Psoas muscle (tissue), 8 donors: ENCODE measurements at regions of chr22 and their contacts with region 1.

Region 1: GRCh38 chr22:43955040-43955882 is at the start of gene SAMM50:
- DNase-seq: peak; percentile 95 to 97
- ATAC-seq: peak; percentile 95 to 96 (median 96)
- H3K4me3 ChIP-seq: peak within 1 kb of the TSS; percentile 85
- H3K27ac ChIP-seq: peak within 1 kb of the TSS; percentile 91
- H3K4me1 ChIP-seq: peaks cover 32% of the 10 kb centered on the region
- H3K27me3 ChIP-seq: no peaks in the 10 kb centered on the region
- CTCF ChIP-seq: no peak
- total RNA-seq, gene SAMM50: 59.3 to 95.0 (median 83.7) TPM

Region 2: GRCh38 chr22:43553451-43554258 is 401.6 kb before region 1 on chr22:
- intact Hi-C with region 1: no loop called
- DNase-seq: no peak
- ATAC-seq: no peak
- H3K4me3 ChIP-seq: no peak overlapping the region
- H3K27ac ChIP-seq: no peak overlapping the region
- H3K4me1 ChIP-seq: no peaks in the 10 kb centered on the region
- H3K27me3 ChIP-seq: no peaks in the 10 kb centered on the region
- CTCF ChIP-seq: no peak

Region 3: DNA sequence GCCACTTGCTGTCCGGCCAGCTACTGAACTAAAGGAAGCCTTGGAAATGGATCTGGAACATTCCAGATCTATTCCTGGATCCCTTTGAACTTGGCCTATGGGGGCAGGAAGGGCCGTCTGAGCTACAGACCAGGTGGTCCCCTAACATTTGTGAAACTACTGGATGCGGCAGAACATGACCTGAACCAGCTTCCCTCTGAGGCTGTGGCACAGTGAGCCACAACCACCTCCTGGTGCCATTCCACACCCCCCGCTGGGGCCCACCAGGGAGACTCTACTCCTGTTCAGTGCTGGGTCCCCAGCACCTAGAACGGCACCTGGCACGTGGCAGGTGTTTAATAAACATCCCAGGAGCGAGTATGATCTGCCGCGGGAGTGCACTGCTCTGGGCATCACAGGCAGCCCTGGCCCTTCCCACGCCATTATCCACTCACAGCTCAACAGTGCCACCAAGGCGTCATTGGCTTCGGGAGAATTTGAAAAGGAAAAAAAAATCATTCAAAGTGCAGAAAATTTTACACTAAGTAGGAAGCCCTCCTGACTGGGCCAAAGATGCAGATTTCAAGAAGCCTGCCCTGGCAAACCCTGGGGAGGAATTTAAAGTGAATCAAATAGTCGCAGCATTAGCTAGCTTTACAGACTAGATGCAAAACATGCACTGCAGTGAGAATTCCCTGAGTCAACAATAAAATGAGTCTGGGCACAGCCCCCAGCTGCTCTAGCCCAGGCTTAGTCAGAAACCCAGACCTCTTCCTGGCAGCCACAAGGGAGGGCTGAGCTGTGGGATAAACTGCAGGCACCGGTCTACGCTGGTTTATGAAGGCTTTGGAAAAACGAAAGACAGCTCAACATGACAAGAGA is 128.9 kb before region 1 on chr22:
- intact Hi-C with region 1: loop called in 1 of 2 experiments (anchors 10 kb)
- DNase-seq: peak in 1 of 2 donors; percentile 46
- ATAC-seq: no peak
- H3K4me3 ChIP-seq: no peak overlapping the region
- H3K27ac ChIP-seq: no peak overlapping the region
- H3K4me1 ChIP-seq: peaks cover 17% of the 10 kb centered on the region
- H3K27me3 ChIP-seq: peaks cover 0 to 33% (median 14%) of the 10 kb centered on the region in 3 donors
- CTCF ChIP-seq: no peak

Region 4: GRCh38 chr22:43923631-43924464 is 31.4 kb before region 1 on chr22 and contains the start of gene PNPLA3:
- intact Hi-C with region 1: no loop called
- DNase-seq: peak; percentile 92
- ATAC-seq: peak; percentile 70 to 95 (median 80)
- H3K4me3 ChIP-seq: peak within 1 kb of the TSS; percentile 71
- H3K27ac ChIP-seq: peak within 1 kb of the TSS; percentile 85
- H3K4me1 ChIP-seq: peaks cover 4% of the 10 kb centered on the region
- H3K27me3 ChIP-seq: peaks cover 0 to 10% (median 1%) of the 10 kb centered on the region in 3 donors
- CTCF ChIP-seq: no peak
- total RNA-seq, gene PNPLA3: 0.32 to 3.3 (median 0.66) TPM